ENCODE measurements at regions of chr11 and their contacts with region 1.

Region 1: DNA sequence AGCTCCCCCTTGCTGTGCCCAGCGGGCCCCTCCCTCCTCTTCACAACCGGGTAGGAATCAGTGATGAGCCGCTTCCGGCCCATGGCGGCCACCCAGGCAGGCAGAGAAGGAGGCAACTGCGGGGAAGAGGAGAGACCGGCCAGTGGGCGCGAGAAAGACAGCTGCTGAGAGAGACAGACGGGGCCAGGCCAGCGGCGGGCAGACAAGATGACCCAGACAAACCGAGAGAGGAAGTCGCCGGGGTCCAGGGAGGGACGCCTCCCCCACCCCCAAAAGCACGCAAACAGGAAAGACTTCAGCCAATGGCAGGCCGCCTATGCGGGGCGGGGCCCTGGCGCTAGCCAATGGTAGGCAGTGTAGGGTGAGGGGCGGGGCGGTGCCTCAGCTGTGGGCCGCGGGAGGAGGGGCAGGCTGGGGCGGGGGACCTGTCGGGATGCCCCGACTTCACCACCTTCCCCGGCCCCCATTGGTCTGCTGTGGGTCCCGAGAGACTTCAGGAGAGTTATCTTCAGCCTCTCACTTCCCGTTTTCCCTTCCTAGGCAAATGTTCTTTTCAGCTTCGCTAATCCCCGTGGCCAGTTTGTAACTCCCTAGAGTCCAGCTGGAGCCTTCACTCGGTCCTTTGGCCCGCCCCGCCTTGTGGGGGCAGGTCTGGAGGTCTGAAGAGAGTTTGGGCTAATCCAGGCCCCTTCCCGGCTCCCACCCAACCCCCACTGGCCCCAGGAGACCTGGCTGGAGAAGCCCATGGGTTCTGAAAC is at the start of gene POLD4:
- DNase-seq: peak; percentile 99
- H3K4me3 ChIP-seq: peak within 1 kb of the TSS; percentile 30 to 69 (median 42)
- H3K27ac ChIP-seq: peak within 1 kb of the TSS; percentile 81 to 99 (median 96)
- H3K4me1 ChIP-seq: peaks cover 25 to 69% of the 10 kb centered on the region in 2 donors
- H3K27me3 ChIP-seq: no peaks in the 10 kb centered on the region
- CTCF ChIP-seq: no peak
- POLR2A ChIP-seq: peak in 1 of 2 donors; percentile 89
- total RNA-seq, gene POLD4: 38.6 to 105 (median 60.6) TPM

Region 2: GRCh38 chr11:67382276-67383136 is 29.0 kb after region 1 on chr11:
- intact Hi-C with region 1: loop called (anchors 2 kb)
- DNase-seq: peak; percentile 78 to 83
- H3K4me3 ChIP-seq: no peak overlapping the region
- H3K27ac ChIP-seq: no peak overlapping the region
- H3K4me1 ChIP-seq: peaks cover 18 to 51% of the 10 kb centered on the region in 2 donors
- H3K27me3 ChIP-seq: no peaks in the 10 kb centered on the region
- CTCF ChIP-seq: peak; percentile 95 to 98 (median 97)
- POLR2A ChIP-seq: no peak

Region 3: DNA sequence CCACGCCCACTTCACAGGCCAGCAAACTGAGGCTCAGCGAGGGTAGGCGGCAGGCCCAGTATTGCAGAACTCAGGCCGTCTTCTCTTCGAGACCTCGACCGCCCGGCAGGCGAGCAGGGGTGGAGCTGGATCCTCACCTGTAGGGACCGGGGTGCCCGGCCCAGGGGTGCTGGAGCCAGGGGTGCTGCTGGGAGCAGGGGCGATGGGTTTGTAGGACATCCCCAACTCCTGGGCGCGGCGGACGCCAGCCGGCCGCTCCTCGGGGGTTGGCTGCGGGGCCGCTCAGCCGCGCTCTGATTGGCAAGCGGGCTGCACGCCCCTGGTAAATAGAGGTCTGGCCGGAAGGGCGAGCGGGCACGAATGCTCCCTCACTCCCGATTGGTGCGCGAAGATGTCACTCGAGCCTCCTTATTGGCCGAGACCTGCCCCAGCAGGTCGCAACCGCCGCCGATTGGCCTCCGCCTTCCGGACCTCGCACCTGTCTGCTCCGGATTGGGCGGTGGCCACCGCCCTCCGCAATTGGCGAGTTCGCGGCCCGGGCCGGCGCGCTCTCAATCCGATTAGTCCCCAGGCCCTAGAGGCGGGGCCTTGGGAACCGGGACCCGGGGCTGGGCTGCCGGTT is 154.5 kb after region 1 on chr11 and contains the start of gene CDK2AP2:
- intact Hi-C with region 1: loop called (anchors 10 kb)
- DNase-seq: peak; percentile 100
- H3K4me3 ChIP-seq: peak within 1 kb of the TSS; percentile 53 to 83 (median 56)
- H3K27ac ChIP-seq: peak within 1 kb of the TSS; percentile 93 to 99 (median 95)
- H3K4me1 ChIP-seq: peaks cover 30 to 35% of the 10 kb centered on the region in 2 donors
- H3K27me3 ChIP-seq: no peaks in the 10 kb centered on the region
- CTCF ChIP-seq: no peak
- POLR2A ChIP-seq: peak; percentile 83 to 96
- total RNA-seq, gene CDK2AP2: 90.0 to 240 (median 148) TPM

Region 4: DNA sequence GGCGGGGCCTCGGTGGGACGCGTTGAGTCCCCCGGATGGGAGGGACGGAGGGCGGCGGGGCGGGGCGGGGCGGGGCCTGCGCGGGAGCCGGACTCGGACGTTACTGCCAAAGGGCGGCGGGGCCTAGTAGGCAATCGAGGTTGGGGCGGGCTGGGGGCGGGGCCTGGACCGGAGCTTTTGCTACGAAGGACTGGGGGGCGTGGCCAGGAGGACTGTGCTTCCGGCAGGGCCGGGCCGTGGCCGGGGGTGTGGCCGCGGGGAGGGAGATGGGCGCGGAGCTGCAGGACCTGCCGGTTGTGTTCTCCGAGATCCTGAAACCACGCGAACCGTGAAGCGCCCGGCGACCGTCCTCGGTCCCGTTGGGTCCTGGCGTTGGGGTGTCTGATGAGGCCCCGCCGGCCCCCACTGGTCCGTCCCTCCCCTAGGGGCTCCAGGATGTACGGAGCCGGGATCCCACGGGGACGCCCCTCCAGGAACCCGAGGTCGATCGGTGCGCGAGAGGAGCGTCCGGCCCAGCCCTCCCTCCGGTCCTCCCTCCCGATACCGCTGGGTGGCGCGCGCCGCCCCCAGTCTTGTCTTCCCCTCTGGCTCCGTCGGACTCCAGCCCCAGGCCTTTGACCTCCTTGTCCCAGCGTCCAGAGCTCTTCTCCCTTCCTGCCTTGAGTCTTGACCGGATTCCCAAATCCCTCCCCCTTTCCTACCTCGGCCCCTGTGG is 276.9 kb after region 1 on chr11:
- intact Hi-C with region 1: no loop called
- DNase-seq: peak; percentile 99
- H3K4me3 ChIP-seq: peak overlapping the region; percentile 16 to 53 (median 34)
- H3K27ac ChIP-seq: peak overlapping the region; percentile 54 to 91 (median 89)
- H3K4me1 ChIP-seq: peaks cover 5 to 28% of the 10 kb centered on the region in 2 donors
- H3K27me3 ChIP-seq: no peaks in the 10 kb centered on the region
- CTCF ChIP-seq: peak; percentile 37 to 72 (median 60)
- POLR2A ChIP-seq: peak; percentile 69 to 86

Measured in thyroid gland (tissue), 4 donors.